Left cardiac atrium (tissue), 4 donors: ENCODE measurements at regions of chr10 and their contacts with region 1.

Region 1: GRCh38 chr10:92087750-92088395 is 164.3 kb downstream of the BTAF1 start:
- DNase-seq: peak; percentile 61
- ATAC-seq: peak; percentile 94 to 97

Region 2: DNA sequence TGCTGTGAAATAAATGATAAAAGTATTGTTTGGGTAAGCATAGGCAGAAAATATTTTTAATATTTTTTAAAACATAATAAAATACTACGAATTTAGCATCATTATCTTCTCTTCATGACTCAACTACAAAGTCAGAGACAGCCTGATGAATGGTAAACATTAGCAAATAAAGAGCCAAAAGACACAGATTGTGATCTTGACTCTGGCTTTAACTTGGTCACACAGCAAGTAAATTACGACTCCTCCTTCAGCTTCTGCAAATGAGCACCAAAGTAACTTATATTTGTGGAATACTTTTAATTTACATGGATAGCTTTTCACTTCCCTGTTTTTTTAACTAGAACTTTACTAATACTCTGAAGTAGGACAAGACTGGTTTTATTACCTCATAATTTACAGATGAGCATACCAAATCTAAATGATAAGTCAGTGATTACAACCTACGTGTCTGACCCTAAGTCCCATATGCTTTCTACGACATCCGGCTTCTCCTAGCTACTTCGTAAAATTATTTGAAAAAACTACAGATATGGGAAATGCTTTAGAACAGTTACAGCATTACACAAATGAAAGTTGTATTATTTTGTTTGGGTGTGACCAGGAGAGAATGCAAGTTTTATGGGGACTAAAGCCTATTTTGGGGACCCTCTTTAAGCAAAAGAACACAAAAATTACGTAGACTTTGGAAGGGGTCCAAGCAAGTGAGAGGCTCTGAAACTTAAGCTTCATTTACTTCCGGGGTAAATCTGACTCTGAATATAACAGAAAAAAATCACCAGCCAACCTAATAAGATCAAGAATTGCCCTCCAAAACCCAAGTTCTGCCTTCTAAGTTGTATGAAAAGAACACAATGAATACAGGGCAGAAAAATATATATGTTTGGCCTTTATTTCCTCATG is 69.3 kb after region 1 on chr10:
- intact Hi-C with region 1: loop called in 1 of 2 experiments (anchors 10 kb)
- DNase-seq: no peak
- ATAC-seq: no peak

Region 3: DNA sequence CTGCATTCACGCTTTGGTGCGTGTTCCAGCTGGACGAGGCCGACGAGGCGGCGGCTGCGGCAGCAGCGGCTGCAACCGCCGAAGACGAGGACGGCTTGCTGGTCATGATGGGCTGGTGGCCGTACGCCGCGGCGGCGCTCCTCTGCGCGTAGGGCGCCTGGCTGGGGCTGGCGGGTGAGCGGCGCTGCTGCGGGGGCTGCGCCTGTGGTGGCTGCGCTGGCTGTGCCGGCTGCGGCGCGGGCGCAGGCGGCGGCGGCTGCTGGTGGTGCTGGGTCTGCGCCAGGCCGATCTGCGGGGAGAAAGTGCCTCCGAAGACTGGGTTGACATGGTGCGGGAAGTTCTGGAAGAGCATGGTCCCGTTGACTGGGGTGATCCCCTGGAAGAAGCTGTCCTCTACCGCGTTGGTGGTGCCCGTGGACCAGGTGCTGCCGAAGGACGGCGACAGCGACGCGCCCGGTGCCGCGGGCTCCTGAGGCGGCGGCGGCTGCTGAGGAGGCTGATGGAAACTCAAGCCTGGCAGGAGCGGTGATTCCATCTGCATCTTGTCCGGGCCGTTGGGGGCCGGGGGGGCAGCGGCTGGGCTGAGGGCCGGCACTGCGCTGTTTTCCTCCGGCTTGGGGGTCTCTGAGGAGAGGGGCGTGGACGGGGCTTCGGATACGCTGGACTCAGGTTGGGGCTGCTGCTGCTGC is 151.9 kb after region 1 on chr10:
- intact Hi-C with region 1: loop called in 1 of 2 experiments (anchors 10 kb)
- DNase-seq: peak; percentile 51
- ATAC-seq: peak; percentile 63 to 69

Region 4: GRCh38 chr10:92290837-92291615 is 203.2 kb after region 1 on chr10 and contains the starts of genes CPEB3 and MARCHF5:
- intact Hi-C with region 1: loop called in 1 of 2 experiments (anchors 5 kb)
- DNase-seq: peak; percentile 98
- ATAC-seq: peak; percentile 99
- total RNA-seq, gene CPEB3: 7.4 to 11.4 TPM
- total RNA-seq, gene MARCHF5: 27.6 to 34.3 TPM

Region 5: DNA sequence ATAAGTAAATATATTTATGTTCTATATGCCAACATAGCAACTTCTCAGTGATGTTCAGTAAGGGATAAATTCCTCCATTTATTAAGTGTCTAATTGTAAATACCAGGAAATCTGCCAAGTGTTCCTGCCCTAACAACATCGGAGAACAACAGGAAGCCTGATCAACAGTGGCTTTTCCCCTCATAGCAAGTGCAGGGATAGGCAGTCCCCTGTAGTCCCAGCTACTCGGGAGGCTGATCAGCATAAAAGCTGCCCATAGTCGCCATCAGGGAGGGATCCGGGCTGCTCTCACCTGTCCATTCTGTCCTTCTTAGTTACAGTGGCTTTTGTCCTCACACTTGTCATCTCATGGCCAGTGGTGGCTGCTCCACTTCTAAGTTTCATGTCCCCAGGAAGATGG is 344.7 kb after region 1 on chr10:
- intact Hi-C with region 1: loop called (anchors 2 to 10 kb)
- DNase-seq: no peak
- ATAC-seq: no peak